ENCODE measurements at regions of chr2 and their contacts with region 1.

Region 1: GRCh38 chr2:190486037-190486623 is 48.4 kb downstream of the NEMP2 start:
- DNase-seq: no peak
- ATAC-seq: no peak
- H3K4me3 ChIP-seq: no peak overlapping the region
- H3K4me3 Mint-ChIP-seq: no peak overlapping the region
- H3K27ac ChIP-seq: no peak overlapping the region
- H3K27ac Mint-ChIP-seq: peak overlapping the region; percentile 72
- H3K4me1 ChIP-seq: no peaks in the 10 kb centered on the region
- H3K4me1 Mint-ChIP-seq: peaks cover 52% of the 10 kb centered on the region
- H3K27me3 ChIP-seq: no peaks in the 10 kb centered on the region
- H3K27me3 Mint-ChIP-seq: no peaks in the 10 kb centered on the region
- CTCF ChIP-seq: no peak

Region 2: GRCh38 chr2:190235101-190235500 is 251.0 kb before region 1 on chr2:
- CTCF ChIA-PET with region 1: no interaction called
- POLR2A ChIA-PET with region 1: no interaction called
- intact Hi-C with region 1: no loop called
- DNase-seq: no peak
- ATAC-seq: no peak
- H3K4me3 ChIP-seq: no peak overlapping the region
- H3K4me3 Mint-ChIP-seq: no peak overlapping the region
- H3K27ac ChIP-seq: no peak overlapping the region
- H3K27ac Mint-ChIP-seq: no peak overlapping the region
- H3K4me1 ChIP-seq: no peaks in the 10 kb centered on the region
- H3K4me1 Mint-ChIP-seq: no peaks in the 10 kb centered on the region
- H3K27me3 ChIP-seq: no peaks in the 10 kb centered on the region
- H3K27me3 Mint-ChIP-seq: no peaks in the 10 kb centered on the region
- CTCF ChIP-seq: no peak

Region 3: GRCh38 chr2:190443778-190444481 is 42.2 kb before region 1 on chr2:
- CTCF ChIA-PET with region 1: interaction called, 4 read pairs
- POLR2A ChIA-PET with region 1: no interaction called
- intact Hi-C with region 1: loop called in 1 of 2 experiments (anchors 5 kb)
- DNase-seq: no peak
- ATAC-seq: no peak
- H3K4me3 ChIP-seq: no peak overlapping the region
- H3K4me3 Mint-ChIP-seq: peak overlapping the region; percentile 23
- H3K27ac ChIP-seq: no peak overlapping the region
- H3K27ac Mint-ChIP-seq: peak overlapping the region; percentile 49
- H3K4me1 ChIP-seq: peaks cover 62% of the 10 kb centered on the region
- H3K4me1 Mint-ChIP-seq: peaks cover 85% of the 10 kb centered on the region
- H3K27me3 ChIP-seq: no peaks in the 10 kb centered on the region
- H3K27me3 Mint-ChIP-seq: no peaks in the 10 kb centered on the region
- CTCF ChIP-seq: no peak

Region 4: DNA sequence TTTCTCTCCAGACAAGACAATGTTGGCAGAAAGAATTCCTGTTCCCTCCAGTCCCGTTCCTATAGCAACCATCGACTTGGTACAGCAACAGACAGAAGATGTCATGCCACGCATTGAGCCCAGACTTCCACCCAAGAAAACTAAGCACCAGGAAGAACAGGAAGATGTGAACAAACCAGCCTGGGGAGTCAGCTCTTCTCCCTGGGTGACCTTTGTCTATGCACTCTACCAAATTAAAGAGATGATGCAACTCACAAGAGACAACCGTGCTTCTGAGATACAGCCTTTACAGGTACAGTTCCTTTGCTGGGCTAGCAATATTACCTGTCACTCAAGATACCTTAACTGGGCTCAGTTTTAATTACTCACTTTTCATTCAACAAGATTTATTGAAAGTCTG is 11.3 kb after region 1 on chr2:
- CTCF ChIA-PET with region 1: no interaction called
- POLR2A ChIA-PET with region 1: no interaction called
- intact Hi-C with region 1: loop called in 1 of 2 experiments (anchors 1 kb)
- DNase-seq: no peak
- ATAC-seq: no peak
- H3K4me3 ChIP-seq: no peak overlapping the region
- H3K4me3 Mint-ChIP-seq: no peak overlapping the region
- H3K27ac ChIP-seq: no peak overlapping the region
- H3K27ac Mint-ChIP-seq: peak overlapping the region; percentile 72
- H3K4me1 ChIP-seq: no peaks in the 10 kb centered on the region
- H3K4me1 Mint-ChIP-seq: peaks cover 32% of the 10 kb centered on the region
- H3K27me3 ChIP-seq: no peaks in the 10 kb centered on the region
- H3K27me3 Mint-ChIP-seq: no peaks in the 10 kb centered on the region
- CTCF ChIP-seq: no peak

Region 5: DNA sequence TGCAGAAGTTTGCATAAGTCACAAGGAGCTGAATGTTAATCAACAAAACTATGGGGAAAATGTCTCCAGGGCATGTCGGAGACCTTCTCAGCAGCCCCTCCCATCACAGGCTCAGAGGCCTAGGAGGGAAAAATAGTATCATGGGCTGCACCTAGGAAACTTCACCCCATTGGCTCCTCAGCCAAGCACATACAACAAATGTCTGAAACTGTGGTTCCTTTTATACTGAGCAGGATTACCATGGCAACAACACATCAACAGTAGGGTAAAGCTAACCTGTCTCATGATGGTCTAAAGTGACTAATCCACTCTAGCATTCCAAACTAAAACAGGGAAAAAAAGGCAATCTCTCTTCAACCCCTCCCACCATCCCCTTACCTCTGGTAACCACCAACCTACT is 51.6 kb after region 1 on chr2:
- CTCF ChIA-PET with region 1: no interaction called
- POLR2A ChIA-PET with region 1: no interaction called
- intact Hi-C with region 1: no loop called
- DNase-seq: peak in 2 of 9 experiments; percentile 49 to 69
- ATAC-seq: no peak
- H3K4me3 ChIP-seq: no peak overlapping the region
- H3K4me3 Mint-ChIP-seq: no peak overlapping the region
- H3K27ac ChIP-seq: no peak overlapping the region
- H3K27ac Mint-ChIP-seq: no peak overlapping the region
- H3K4me1 ChIP-seq: peaks cover 16% of the 10 kb centered on the region
- H3K4me1 Mint-ChIP-seq: peaks cover 35% of the 10 kb centered on the region
- H3K27me3 ChIP-seq: no peaks in the 10 kb centered on the region
- H3K27me3 Mint-ChIP-seq: no peaks in the 10 kb centered on the region
- CTCF ChIP-seq: no peak